AG04450 (cell line): ENCODE measurements at regions of chrX and their contacts with region 1.

Region 1: GRCh38 chrX:97622111-97622510 is 738.4 kb downstream of the RPA4 start:
- DNase-seq: no peak
- H3K4me3 ChIP-seq: no peak overlapping the region
- H3K27ac ChIP-seq: no peak overlapping the region
- H3K27me3 ChIP-seq: no peaks in the 10 kb centered on the region
- CTCF ChIP-seq: no peak

Region 2: GRCh38 chrX:97326456-97326855 is 295.7 kb before region 1 on chrX:
- CTCF ChIA-PET with region 1: no interaction called
- POLR2A ChIA-PET with region 1: no interaction called
- DNase-seq: no peak
- H3K4me3 ChIP-seq: no peak overlapping the region
- H3K27ac ChIP-seq: no peak overlapping the region
- H3K27me3 ChIP-seq: no peaks in the 10 kb centered on the region
- CTCF ChIP-seq: no peak

Region 3: DNA sequence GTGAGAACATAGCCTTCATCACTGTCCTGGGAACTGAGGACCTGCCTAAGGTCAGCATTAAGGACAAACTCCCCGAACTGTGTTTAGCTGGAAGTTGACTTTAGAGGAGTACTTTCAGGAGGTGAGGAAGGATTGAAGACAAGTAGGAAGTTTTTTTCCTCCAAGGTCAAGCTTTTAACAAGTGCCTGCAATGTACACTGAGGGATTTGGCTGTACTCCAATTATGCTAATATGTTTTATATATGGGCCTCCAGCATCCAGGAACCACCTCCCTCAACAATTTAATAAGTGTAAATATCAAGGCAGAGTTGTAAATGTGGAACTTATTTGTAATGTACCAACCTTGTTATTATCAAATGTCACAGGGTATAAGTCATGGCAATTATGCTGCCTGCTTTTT is 12.2 kb before region 1 on chrX:
- CTCF ChIA-PET with region 1: interaction called, 10 read pairs
- POLR2A ChIA-PET with region 1: no interaction called
- DNase-seq: no peak
- H3K4me3 ChIP-seq: no peak overlapping the region
- H3K27ac ChIP-seq: no peak overlapping the region
- H3K27me3 ChIP-seq: no peaks in the 10 kb centered on the region
- CTCF ChIP-seq: no peak